Caco-2 (cell line): ENCODE measurements at regions of chr22 and their contacts with region 1.

Region 1: GRCh38 chr22:30634471-30635233 is 929 bp upstream of the SLC35E4 start:
- DNase-seq: peak; percentile 83 to 89
- H3K4me3 ChIP-seq: no peak overlapping the region; the same call in 1 of the 2 replicates
- H3K4me3 Mint-ChIP-seq: peak overlapping the region; percentile 66
- H3K27ac Mint-ChIP-seq: no peak overlapping the region
- H3K4me1 ChIP-seq: peaks cover 13% of the 10 kb centered on the region
- H3K4me1 Mint-ChIP-seq: no peaks in the 10 kb centered on the region
- H3K27me3 ChIP-seq: no peaks in the 10 kb centered on the region
- H3K27me3 Mint-ChIP-seq: no peaks in the 10 kb centered on the region
- CTCF ChIP-seq: peak; percentile 92 to 94

Region 2: DNA sequence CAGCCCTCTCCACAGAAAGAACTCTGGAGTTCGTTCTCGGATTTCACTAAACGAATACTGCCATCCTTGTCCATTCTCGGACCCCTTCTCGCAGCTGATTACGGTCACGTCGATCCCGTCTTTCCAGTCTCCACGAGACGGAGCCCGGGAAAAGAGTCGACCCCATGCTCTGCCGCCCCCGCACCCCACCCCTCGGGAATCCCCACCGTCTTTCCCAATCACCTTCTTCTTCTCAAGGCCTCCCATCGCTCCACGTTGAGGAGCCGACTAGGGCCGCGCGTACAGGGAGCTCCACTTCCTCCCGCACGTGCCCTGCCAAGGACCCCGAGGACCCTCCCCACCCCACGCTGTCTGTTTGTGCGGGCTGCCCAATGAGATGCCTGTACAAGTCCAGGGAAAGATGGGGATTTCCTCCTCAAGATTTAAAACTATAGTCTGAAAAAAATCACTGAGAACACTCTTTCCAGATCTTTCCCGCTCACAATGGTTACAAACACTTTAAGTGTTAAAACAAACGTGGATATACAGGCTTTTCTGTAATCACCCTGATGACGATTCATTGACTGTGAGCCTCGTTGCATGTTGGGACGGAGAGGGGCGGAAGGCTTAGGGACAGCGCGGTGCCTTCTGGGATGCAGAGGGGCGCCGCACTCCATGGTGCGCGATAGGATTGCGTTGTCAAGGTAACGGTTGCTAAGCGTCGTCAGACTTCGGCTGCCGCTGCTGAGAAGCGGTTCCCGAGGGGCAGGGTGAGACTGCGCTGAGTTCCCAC is 42.9 kb before region 1 on chr22 and contains the start of gene PES1:
- CTCF ChIA-PET with region 1: no interaction called
- POLR2A ChIA-PET with region 1: no interaction called
- intact Hi-C with region 1: no loop called
- DNase-seq: peak; percentile 95 to 97
- H3K4me3 ChIP-seq: peak within 1 kb of the TSS; percentile 77
- H3K4me3 Mint-ChIP-seq: no peak within 1 kb of the TSS
- H3K27ac Mint-ChIP-seq: no peak within 1 kb of the TSS
- H3K4me1 ChIP-seq: peaks cover 8% of the 10 kb centered on the region
- H3K4me1 Mint-ChIP-seq: no peaks in the 10 kb centered on the region
- H3K27me3 ChIP-seq: no peaks in the 10 kb centered on the region
- H3K27me3 Mint-ChIP-seq: peaks cover 4% of the 10 kb centered on the region
- CTCF ChIP-seq: no peak
- total RNA-seq, gene PES1: 110 and 117 TPM in 2 replicates

Region 3: GRCh38 chr22:30667494-30668385 is 33.1 kb after region 1 on chr22 and contains the start of gene DUSP18:
- CTCF ChIA-PET with region 1: interaction called, 9 read pairs
- POLR2A ChIA-PET with region 1: no interaction called
- intact Hi-C with region 1: loop called (anchors 1 kb)
- DNase-seq: peak; percentile 93 to 96
- H3K4me3 ChIP-seq: peak within 1 kb of the TSS; percentile 86
- H3K4me3 Mint-ChIP-seq: peak within 1 kb of the TSS; percentile 94
- H3K27ac Mint-ChIP-seq: peak within 1 kb of the TSS; percentile 86
- H3K4me1 ChIP-seq: peaks cover 4% of the 10 kb centered on the region; the same call in 1 of the 2 replicates
- H3K4me1 Mint-ChIP-seq: peaks cover 17% of the 10 kb centered on the region
- H3K27me3 ChIP-seq: no peaks in the 10 kb centered on the region; the same call in 1 of the 2 replicates
- H3K27me3 Mint-ChIP-seq: no peaks in the 10 kb centered on the region
- CTCF ChIP-seq: peak; percentile 40 to 51
- total RNA-seq, gene DUSP18: 6.0 and 7.9 TPM in 2 replicates

Region 4: DNA sequence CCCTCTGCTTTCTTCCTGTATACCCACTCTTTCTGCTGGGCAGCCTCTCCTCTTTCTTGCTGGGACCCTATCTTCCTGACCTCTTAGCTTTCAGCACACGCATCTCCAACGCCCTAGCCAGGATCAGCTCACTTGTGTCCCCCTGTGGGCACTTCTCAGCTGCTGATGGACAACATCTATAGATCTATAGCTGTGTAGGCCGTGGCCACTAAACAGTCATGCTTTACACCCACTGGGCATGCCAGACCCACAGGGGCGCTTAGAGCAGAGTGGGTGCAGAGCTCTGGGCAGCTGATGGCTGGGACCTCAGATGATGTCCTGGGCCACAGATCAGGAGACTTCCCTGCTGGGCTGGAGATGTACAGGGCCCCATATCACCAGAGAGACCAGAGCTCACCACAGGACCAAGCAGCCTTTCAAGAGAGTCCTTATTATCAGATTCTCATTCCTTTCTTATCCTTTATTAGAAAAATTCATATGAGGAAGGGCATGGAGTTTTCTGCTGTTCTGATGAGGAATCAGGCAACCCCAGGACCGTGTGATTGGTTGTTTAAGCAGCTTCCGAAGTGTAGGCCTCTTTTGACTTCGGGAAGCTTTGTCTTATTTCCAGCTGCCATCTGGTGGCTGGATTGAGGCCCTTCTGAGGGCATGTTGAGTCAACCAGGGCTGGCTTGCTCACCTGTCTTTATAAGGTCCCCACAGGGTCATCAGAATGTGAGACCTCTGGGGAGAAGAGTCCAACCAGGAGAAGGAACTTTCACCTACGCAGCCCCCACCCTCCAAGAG is 120.5 kb after region 1 on chr22:
- CTCF ChIA-PET with region 1: interaction called, 94 read pairs
- POLR2A ChIA-PET with region 1: no interaction called
- intact Hi-C with region 1: loop called (anchors 1 kb)
- DNase-seq: peak; percentile 69 to 71
- H3K4me3 ChIP-seq: no peak overlapping the region
- H3K4me3 Mint-ChIP-seq: no peak overlapping the region
- H3K27ac Mint-ChIP-seq: no peak overlapping the region
- H3K4me1 ChIP-seq: no peaks in the 10 kb centered on the region
- H3K4me1 Mint-ChIP-seq: peaks cover 6% of the 10 kb centered on the region
- H3K27me3 ChIP-seq: no peaks in the 10 kb centered on the region
- H3K27me3 Mint-ChIP-seq: peaks cover 8% of the 10 kb centered on the region
- CTCF ChIP-seq: peak; percentile 22 to 83

Region 5: DNA sequence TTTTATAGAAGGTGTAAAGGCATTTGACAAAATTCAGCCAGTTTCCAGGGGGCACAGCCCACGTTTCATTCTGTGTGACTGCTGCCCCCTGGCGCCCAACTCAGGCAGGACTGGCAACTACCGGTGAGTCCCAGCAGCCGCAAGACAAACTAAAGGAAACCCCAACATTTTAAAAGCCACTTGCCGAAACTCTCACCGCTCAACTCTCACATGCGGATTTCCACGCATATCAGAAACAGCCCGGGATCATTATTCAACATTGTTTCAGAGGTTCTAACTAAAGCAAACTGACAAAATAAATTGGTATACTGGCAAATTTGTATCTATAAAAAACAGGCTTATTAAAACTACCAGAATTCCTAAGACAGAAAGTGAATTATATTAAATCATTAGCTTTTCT is 285.8 kb after region 1 on chr22:
- CTCF ChIA-PET with region 1: interaction called, 6 read pairs
- POLR2A ChIA-PET with region 1: no interaction called
- intact Hi-C with region 1: loop called (anchors 2 kb)
- DNase-seq: peak; percentile 73 to 84
- H3K4me3 ChIP-seq: peak overlapping the region; percentile 49
- H3K4me3 Mint-ChIP-seq: peak overlapping the region; percentile 60
- H3K27ac Mint-ChIP-seq: no peak overlapping the region
- H3K4me1 ChIP-seq: no peaks in the 10 kb centered on the region
- H3K4me1 Mint-ChIP-seq: peaks cover 5% of the 10 kb centered on the region
- H3K27me3 ChIP-seq: no peaks in the 10 kb centered on the region
- H3K27me3 Mint-ChIP-seq: no peaks in the 10 kb centered on the region
- CTCF ChIP-seq: peak; percentile 91 to 93